PC-9 (cell line): ENCODE measurements at regions of chr5 and their contacts with region 1.

Region 1: DNA sequence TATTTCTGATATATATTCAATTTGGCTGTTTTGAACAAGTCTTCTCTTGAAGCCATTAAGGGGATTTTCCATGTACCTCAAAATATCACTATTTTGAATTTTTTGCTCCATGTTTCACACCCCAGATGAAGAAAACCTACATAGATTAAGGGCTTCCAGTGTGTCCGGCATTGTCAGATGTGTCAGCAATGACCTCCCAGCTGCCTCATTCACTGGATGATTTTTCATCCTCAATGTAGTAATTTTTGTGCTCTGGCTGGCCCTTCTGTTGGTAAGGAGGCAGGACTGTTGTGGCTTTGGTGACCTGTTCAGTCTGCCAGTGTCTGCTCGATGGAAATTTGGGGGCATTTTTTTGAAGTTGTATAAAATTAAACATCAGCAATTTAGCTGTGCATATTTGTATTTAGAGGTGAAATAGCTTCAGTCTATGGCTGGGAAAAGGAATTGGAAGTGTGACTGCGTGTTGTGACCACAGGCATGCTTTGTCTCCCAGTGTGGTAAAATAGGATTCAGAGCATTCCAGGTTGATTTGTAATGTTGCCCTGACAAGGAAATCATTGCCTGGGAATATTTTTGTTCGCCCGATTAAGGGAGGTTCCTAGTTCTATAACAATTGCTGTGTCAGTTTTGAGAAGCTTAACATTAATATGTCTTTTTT is 312.4 kb downstream of the ARHGEF28 start:
- DNase-seq: peak; percentile 77 to 98
- H3K4me3 ChIP-seq: peak overlapping the region; percentile 28; the same call in 1 of the 2 replicates
- H3K27ac ChIP-seq: peak overlapping the region; percentile 98
- H3K4me1 ChIP-seq: peaks cover 33% of the 10 kb centered on the region
- H3K27me3 ChIP-seq: no peaks in the 10 kb centered on the region
- CTCF ChIP-seq: no peak

Region 2: DNA sequence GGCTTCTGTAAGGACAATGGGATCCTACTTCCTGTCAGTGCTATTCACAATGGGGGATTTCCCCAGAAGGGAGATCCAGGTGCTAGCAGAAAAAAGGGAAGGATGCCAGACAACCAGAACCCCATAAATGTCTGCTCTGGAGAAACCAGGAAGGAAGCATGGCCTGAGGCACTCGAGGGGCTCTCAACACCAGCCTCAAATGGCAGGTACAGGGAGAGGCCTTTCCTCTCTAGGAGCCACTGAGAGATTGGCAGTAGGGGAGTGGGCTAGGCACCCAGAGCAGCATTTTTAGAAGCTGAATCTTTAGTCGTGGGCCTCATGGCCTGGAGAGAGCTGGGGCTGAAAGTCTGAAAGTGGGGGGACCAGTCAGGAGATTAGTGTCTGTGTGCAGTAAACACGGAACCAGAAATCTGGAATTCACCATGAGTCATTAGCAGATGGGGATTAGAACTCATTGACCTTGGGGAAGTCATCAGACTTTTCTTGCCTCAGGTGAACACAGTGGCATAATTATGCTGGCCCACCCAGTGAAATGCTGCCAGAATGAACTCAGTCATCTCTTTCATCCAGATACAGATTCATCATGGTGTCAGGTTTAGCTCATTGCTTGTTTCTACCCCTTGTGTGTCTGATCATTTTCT is 284.1 kb before region 1 on chr5:
- CTCF ChIA-PET with region 1: no interaction called
- POLR2A ChIA-PET with region 1: interaction called, 12 read pairs
- intact Hi-C with region 1: no loop called
- DNase-seq: peak; percentile 61 to 96
- H3K4me3 ChIP-seq: no peak overlapping the region
- H3K27ac ChIP-seq: peak overlapping the region; percentile 96
- H3K4me1 ChIP-seq: peaks cover 65% of the 10 kb centered on the region
- H3K27me3 ChIP-seq: no peaks in the 10 kb centered on the region
- CTCF ChIP-seq: no peak

Region 3: DNA sequence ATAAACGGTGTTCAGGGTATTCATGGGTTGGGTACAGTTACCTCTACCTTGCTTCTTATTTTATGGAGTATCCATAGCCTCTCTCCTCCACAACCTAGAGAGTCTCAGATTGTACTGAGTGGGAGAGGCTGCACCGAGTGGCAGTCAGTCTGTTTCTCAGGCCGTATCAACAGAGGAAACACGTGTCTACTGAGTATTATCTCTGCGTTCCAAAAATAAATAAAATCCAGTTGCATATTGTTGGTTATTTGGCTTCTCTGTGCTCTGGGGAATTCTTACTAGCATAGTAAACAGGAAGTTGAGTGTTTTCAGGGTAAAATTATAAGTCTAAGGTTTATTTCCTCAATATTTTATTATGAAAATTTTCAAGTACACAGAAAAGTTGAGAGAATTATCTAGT is 81.4 kb before region 1 on chr5:
- CTCF ChIA-PET with region 1: no interaction called
- POLR2A ChIA-PET with region 1: no interaction called
- intact Hi-C with region 1: no loop called
- DNase-seq: no peak
- H3K4me3 ChIP-seq: no peak overlapping the region
- H3K27ac ChIP-seq: no peak overlapping the region
- H3K4me1 ChIP-seq: peaks cover 13% of the 10 kb centered on the region
- H3K27me3 ChIP-seq: no peaks in the 10 kb centered on the region
- CTCF ChIP-seq: no peak

Region 4: GRCh38 chr5:73962801-73963425 is 24.5 kb after region 1 on chr5:
- CTCF ChIA-PET with region 1: interaction called, 3 read pairs
- POLR2A ChIA-PET with region 1: interaction called, 4 read pairs
- intact Hi-C with region 1: loop called (anchors 1 kb)
- DNase-seq: peak; percentile 62 to 89
- H3K4me3 ChIP-seq: no peak overlapping the region
- H3K27ac ChIP-seq: peak overlapping the region; percentile 62
- H3K4me1 ChIP-seq: peaks cover 6% of the 10 kb centered on the region
- H3K27me3 ChIP-seq: no peaks in the 10 kb centered on the region
- CTCF ChIP-seq: no peak

Region 5: GRCh38 chr5:74017786-74018211 is 79.4 kb after region 1 on chr5:
- CTCF ChIA-PET with region 1: no interaction called
- POLR2A ChIA-PET with region 1: interaction called, 9 read pairs
- intact Hi-C with region 1: loop called (anchors 5 kb)
- DNase-seq: peak; percentile 51 to 90
- H3K4me3 ChIP-seq: no peak overlapping the region
- H3K27ac ChIP-seq: peak overlapping the region; percentile 75
- H3K4me1 ChIP-seq: peaks cover 24% of the 10 kb centered on the region
- H3K27me3 ChIP-seq: no peaks in the 10 kb centered on the region
- CTCF ChIP-seq: no peak

Region 6: GRCh38 chr5:74206571-74207550 is 268.5 kb after region 1 on chr5:
- CTCF ChIA-PET with region 1: no interaction called
- POLR2A ChIA-PET with region 1: no interaction called
- intact Hi-C with region 1: no loop called
- DNase-seq: peak in 1 of 2 experiments; percentile 74
- H3K4me3 ChIP-seq: no peak overlapping the region
- H3K27ac ChIP-seq: no peak overlapping the region
- H3K4me1 ChIP-seq: peaks cover 18% of the 10 kb centered on the region
- H3K27me3 ChIP-seq: no peaks in the 10 kb centered on the region
- CTCF ChIP-seq: no peak

Region 7: GRCh38 chr5:74272024-74272775 is 333.8 kb after region 1 on chr5:
- CTCF ChIA-PET with region 1: no interaction called
- POLR2A ChIA-PET with region 1: no interaction called
- intact Hi-C with region 1: loop called (anchors 2 kb)
- DNase-seq: peak; percentile 59 to 80
- H3K4me3 ChIP-seq: no peak overlapping the region
- H3K27ac ChIP-seq: peak overlapping the region; percentile 71
- H3K4me1 ChIP-seq: peaks cover 22% of the 10 kb centered on the region
- H3K27me3 ChIP-seq: no peaks in the 10 kb centered on the region
- CTCF ChIP-seq: no peak

Region 8: GRCh38 chr5:74543156-74543995 is 605.0 kb after region 1 on chr5:
- CTCF ChIA-PET with region 1: no interaction called
- POLR2A ChIA-PET with region 1: no interaction called
- intact Hi-C with region 1: loop called (anchors 2 kb)
- DNase-seq: peak; percentile 86 to 97
- H3K4me3 ChIP-seq: peak overlapping the region; percentile 31; the same call in 1 of the 2 replicates
- H3K27ac ChIP-seq: peak overlapping the region; percentile 95
- H3K4me1 ChIP-seq: peaks cover 73% of the 10 kb centered on the region
- H3K27me3 ChIP-seq: no peaks in the 10 kb centered on the region
- CTCF ChIP-seq: no peak